ENCODE measurements at regions of chr1 and their contacts with region 1.

Region 1: DNA sequence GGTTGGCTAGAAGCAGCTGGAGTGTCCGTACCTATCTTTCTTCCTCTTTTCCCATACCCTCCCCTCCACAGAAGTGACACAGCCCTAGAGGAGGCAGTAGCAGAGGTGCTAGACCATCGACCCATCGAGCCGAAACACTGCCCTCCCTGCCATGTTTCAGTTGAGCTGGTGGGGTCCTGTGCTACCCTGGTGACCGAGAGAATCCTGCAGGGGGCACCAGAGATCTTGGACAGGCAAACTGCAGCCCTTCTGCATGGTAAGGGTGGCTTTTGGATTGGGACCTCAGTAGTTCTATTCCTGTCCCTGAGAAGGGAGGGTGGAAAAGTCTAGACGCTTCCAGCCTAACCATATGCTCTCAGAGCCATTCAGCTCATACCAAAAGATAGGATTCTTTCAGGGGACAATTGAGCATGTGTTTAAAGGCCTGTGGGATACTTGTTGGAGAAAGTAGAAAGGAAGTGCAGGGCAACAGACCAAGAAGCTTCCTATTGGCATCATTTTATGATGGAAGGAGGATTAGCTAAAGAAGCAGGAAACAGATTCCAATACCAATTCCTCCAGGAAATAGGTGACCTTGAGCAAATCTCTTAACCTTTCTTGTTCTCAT is 11.7 kb upstream of the BNIPL start:
- DNase-seq: peak; percentile 82 to 93
- ATAC-seq: peak; percentile 97 to 100 (median 100)
- H3K4me3 ChIP-seq: no peak overlapping the region
- H3K4me3 Mint-ChIP-seq: no peak overlapping the region
- H3K27ac ChIP-seq: no peak overlapping the region
- H3K27ac Mint-ChIP-seq: peak overlapping the region in 1 of 2 donors; percentile 76
- H3K4me1 ChIP-seq: peaks cover 7% of the 10 kb centered on the region
- H3K4me1 Mint-ChIP-seq: peaks cover 6 to 7% of the 10 kb centered on the region in 2 donors
- H3K27me3 ChIP-seq: no peaks in the 10 kb centered on the region
- H3K27me3 Mint-ChIP-seq: no peaks in the 10 kb centered on the region
- CTCF ChIP-seq: peak; percentile 77

Region 2: DNA sequence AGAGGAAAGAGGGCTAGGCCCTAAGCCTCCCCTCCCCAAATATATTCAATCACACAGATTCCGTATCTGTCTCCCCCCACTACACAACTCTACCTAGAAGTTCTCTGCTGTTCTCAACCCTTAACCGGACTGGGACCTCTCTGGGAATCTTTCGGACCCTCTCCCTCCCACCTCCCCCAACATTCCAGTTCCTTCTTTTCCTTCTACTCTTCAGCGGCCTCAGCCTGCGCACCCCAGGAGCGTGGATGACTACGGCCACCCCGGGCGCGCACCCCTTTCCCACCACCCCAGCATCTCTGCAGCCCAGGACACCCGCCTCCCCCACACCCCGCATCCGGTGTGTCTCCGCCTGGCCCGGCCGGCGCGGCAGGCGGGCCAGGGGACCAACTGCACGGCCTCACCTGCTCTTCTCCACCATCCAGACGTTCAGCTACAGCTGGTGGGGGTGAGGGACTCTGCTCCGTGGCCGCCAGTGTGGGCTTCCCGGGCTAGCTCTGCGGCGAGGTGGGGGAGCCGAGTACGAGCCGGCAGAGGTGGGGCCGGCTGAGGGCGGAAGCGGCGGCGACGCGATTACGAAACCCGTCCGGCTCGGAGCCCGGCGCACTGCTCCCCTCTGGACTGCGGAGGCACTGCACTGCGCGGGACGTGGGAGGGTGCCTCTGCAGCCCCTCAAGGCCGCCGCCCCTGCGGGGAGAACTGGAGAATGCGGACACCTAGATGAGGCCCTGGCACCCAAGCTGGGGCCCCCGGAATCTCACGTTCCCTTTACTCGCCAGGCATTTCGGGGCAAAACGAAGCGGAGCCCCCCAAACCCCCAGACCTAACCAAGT is 34.6 kb after region 1 on chr1 and contains the start of gene CDC42SE1:
- intact Hi-C with region 1: loop called (anchors 5 kb)
- DNase-seq: peak; percentile 84 to 94
- ATAC-seq: peak; percentile 56 to 83 (median 67)
- H3K4me3 ChIP-seq: peak within 1 kb of the TSS; percentile 95
- H3K4me3 Mint-ChIP-seq: peak within 1 kb of the TSS; percentile 92
- H3K27ac ChIP-seq: peak within 1 kb of the TSS; percentile 89
- H3K27ac Mint-ChIP-seq: peak within 1 kb of the TSS; percentile 98 to 99
- H3K4me1 ChIP-seq: peaks cover 41% of the 10 kb centered on the region
- H3K4me1 Mint-ChIP-seq: peaks cover 65 to 69% of the 10 kb centered on the region in 2 donors
- H3K27me3 ChIP-seq: no peaks in the 10 kb centered on the region
- H3K27me3 Mint-ChIP-seq: no peaks in the 10 kb centered on the region
- CTCF ChIP-seq: peak; percentile 78
- total RNA-seq, gene CDC42SE1: 555 to 792 (median 752) TPM

Region 3: GRCh38 chr1:151070474-151071276 is 46.0 kb after region 1 on chr1 and contains the start of gene GABPB2:
- intact Hi-C with region 1: loop called (anchors 1 kb)
- DNase-seq: peak; percentile 86 to 95
- ATAC-seq: peak; percentile 84 to 97 (median 87)
- H3K4me3 ChIP-seq: peak within 1 kb of the TSS; percentile 81
- H3K4me3 Mint-ChIP-seq: peak within 1 kb of the TSS; percentile 98
- H3K27ac ChIP-seq: peak within 1 kb of the TSS; percentile 96
- H3K27ac Mint-ChIP-seq: peak within 1 kb of the TSS; percentile 99 to 100
- H3K4me1 ChIP-seq: peaks cover 16% of the 10 kb centered on the region
- H3K4me1 Mint-ChIP-seq: peaks cover 11 to 18% of the 10 kb centered on the region in 2 donors
- H3K27me3 ChIP-seq: no peaks in the 10 kb centered on the region
- H3K27me3 Mint-ChIP-seq: no peaks in the 10 kb centered on the region
- CTCF ChIP-seq: peak; percentile 88
- total RNA-seq, gene GABPB2: 27.4 to 34.0 (median 30.6) TPM

Region 4: GRCh38 chr1:151098126-151098525 is 73.5 kb after region 1 on chr1:
- intact Hi-C with region 1: loop called (anchors 1 kb)
- DNase-seq: no peak
- ATAC-seq: no peak
- H3K4me3 ChIP-seq: no peak overlapping the region
- H3K4me3 Mint-ChIP-seq: no peak overlapping the region
- H3K27ac ChIP-seq: no peak overlapping the region
- H3K27ac Mint-ChIP-seq: no peak overlapping the region
- H3K4me1 ChIP-seq: no peaks in the 10 kb centered on the region
- H3K4me1 Mint-ChIP-seq: no peaks in the 10 kb centered on the region
- H3K27me3 ChIP-seq: no peaks in the 10 kb centered on the region
- H3K27me3 Mint-ChIP-seq: no peaks in the 10 kb centered on the region
- CTCF ChIP-seq: no peak

Region 5: DNA sequence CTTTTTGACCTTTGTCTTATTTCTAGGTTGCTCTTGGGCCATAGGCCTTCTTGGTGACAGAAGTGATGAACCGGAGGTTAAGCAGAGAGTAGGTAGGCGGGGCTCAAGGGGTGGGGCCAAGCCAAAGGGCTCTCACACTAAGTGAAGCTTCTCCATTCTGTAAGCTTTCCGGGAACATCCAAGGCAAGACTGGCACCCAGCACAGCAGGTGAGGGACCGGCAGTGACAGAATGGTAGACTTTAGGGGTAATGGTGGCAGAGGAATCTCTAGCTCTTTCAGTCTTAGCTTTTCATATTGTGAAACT is 131.8 kb after region 1 on chr1 and contains the start of gene TNFAIP8L2:
- intact Hi-C with region 1: loop called (anchors 1 kb)
- DNase-seq: peak; percentile 58 to 80
- ATAC-seq: peak; percentile 83 to 91 (median 89)
- H3K4me3 ChIP-seq: peak within 1 kb of the TSS; percentile 76
- H3K4me3 Mint-ChIP-seq: peak within 1 kb of the TSS; percentile 96
- H3K27ac ChIP-seq: peak within 1 kb of the TSS; percentile 68
- H3K27ac Mint-ChIP-seq: peak within 1 kb of the TSS; percentile 89 to 96
- H3K4me1 ChIP-seq: peaks cover 46% of the 10 kb centered on the region
- H3K4me1 Mint-ChIP-seq: peaks cover 39 to 47% of the 10 kb centered on the region in 2 donors
- H3K27me3 ChIP-seq: no peaks in the 10 kb centered on the region
- H3K27me3 Mint-ChIP-seq: no peaks in the 10 kb centered on the region
- CTCF ChIP-seq: no peak
- total RNA-seq, gene TNFAIP8L2: 4.8 to 14.5 (median 5.7) TPM

Region 6: DNA sequence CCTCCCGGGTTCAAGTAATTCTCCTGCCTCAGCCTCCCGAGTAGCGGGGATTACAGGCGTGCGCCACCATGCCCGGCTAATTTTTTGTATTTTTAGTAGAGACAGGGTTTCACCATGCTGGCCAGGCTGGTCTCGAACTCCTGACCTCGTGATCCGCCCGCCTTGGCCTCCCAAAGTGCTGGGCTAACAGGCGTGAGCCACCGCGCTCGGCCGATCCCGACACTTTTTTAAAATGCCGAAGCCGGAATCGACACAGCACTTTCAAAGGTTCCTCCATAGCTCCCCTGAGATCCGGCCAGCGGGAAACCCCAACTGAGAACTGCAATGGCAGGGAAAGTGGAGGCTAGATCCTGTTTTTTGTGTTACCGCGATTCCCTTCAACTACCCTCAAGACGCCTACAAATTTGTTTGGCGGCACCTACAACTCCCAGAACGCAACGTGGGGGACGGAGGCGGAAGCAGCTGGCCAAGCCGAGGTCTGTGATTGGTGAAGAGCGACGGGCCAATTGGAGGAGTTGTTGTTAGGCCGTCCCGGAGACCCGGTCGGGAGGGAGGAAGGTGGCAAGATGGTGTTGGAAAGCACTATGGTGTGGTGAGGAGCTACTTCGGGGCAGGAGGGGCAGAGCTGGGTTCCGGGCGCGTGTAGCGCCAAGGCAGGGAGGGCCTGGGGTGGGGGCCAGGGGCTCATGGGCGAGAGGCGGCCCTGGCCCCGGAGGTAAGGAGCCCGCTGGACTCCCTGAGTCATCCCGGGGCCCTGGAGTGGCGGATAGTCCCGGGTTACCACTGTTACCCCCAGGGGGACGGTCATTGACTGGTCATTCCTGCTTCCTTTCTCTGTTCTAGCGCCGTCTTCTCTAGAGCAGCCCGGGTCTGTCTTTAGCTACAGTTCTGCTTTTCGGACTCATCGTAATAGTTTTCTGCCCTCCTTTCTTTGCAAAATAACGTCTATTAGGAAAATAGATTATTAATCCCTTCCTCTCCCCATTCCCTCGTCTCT is 229.9 kb after region 1 on chr1 and contains the start of gene PSMD4:
- intact Hi-C with region 1: loop called (anchors 10 kb)
- DNase-seq: peak; percentile 89 to 98
- ATAC-seq: peak; percentile 91 to 99 (median 95)
- H3K4me3 ChIP-seq: peak within 1 kb of the TSS; percentile 81
- H3K4me3 Mint-ChIP-seq: peak within 1 kb of the TSS; percentile 96
- H3K27ac ChIP-seq: peak within 1 kb of the TSS; percentile 79
- H3K27ac Mint-ChIP-seq: peak within 1 kb of the TSS; percentile 94 to 97
- H3K4me1 ChIP-seq: peaks cover 15% of the 10 kb centered on the region
- H3K4me1 Mint-ChIP-seq: peaks cover 31 to 32% of the 10 kb centered on the region in 2 donors
- H3K27me3 ChIP-seq: no peaks in the 10 kb centered on the region
- H3K27me3 Mint-ChIP-seq: no peaks in the 10 kb centered on the region
- CTCF ChIP-seq: no peak
- total RNA-seq, gene PSMD4: 94.2 to 101 (median 99.3) TPM

Measured in natural killer cell (primary cell).